Endothelial cell of umbilical vein (primary cell): ENCODE measurements at regions of chr12 and their contacts with region 1.

Region 1: GRCh38 chr12:75977952-75978671 is 53.5 kb downstream of the PHLDA1 start:
- DNase-seq: peak; percentile 100
- H3K4me3 ChIP-seq: no peak overlapping the region
- H3K27ac ChIP-seq: peak overlapping the region; percentile 96
- H3K4me1 ChIP-seq: peaks cover 44% of the 10 kb centered on the region
- H3K27me3 ChIP-seq: no peaks in the 10 kb centered on the region
- CTCF ChIP-seq: peak in 1 of 2 donors; percentile 11
- POLR2A ChIP-seq: no peak

Region 2: GRCh38 chr12:75526655-75527511 is 451.2 kb before region 1 on chr12:
- CTCF ChIA-PET with region 1: interaction called, 4 read pairs
- POLR2A ChIA-PET with region 1: no interaction called
- dilution Hi-C with region 1: no loop called
- intact Hi-C with region 1: loop called (anchors 1 kb)
- DNase-seq: peak; percentile 70
- H3K4me3 ChIP-seq: no peak overlapping the region
- H3K27ac ChIP-seq: no peak overlapping the region
- H3K4me1 ChIP-seq: no peaks in the 10 kb centered on the region
- H3K27me3 ChIP-seq: no peaks in the 10 kb centered on the region
- CTCF ChIP-seq: peak; percentile 38 to 49
- POLR2A ChIP-seq: no peak

Region 3: DNA sequence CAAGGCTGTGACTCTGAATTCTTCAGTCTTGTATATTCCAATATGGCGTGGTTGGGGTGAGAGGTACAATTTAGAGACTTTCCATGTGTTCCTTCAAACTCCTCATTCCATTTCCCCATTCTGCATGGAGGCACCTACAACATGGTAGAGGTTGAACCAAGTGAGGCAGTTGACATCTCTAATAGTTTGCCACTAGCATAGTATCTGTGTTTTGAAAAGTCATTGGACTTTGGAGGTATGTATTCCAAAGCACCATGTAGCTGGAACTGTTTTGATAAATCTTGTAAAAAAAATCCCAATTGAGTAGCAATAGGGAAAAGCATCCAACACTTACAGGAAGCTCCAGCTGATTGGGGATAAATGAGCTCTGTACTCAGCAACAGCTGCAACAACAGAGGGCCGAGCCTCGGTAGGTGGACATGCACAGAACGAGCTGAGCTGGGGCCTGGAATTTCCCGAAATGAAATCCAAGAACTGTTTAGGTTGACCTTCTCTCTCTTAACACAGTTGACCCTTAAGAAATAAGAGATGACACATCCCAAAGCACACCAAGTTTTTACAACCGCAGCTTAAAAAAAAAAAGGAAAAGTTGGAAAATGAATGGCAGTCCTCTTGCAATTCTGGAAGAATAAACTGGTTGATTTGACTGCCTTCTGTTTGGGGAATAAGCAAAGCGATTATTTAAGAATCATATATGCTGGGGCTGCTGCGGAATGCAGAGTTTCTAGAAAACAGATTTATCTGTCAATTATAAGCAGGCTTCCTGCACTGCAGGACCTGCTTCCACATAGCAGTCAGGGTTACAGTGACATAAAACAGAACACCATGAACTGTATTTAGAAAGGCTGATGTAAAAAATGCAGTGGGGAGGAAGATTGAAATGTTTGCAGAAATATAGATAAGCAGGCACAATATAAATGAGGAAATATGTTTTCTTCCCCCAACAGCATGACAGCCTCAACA is 272.1 kb before region 1 on chr12:
- CTCF ChIA-PET with region 1: no interaction called
- POLR2A ChIA-PET with region 1: no interaction called
- dilution Hi-C with region 1: no loop called
- intact Hi-C with region 1: loop called (anchors 1 kb)
- DNase-seq: peak; percentile 98
- H3K4me3 ChIP-seq: peak overlapping the region in 1 of 3 experiments; percentile 37
- H3K27ac ChIP-seq: peak overlapping the region; percentile 84
- H3K4me1 ChIP-seq: peaks cover 44% of the 10 kb centered on the region
- H3K27me3 ChIP-seq: no peaks in the 10 kb centered on the region
- CTCF ChIP-seq: no peak
- POLR2A ChIP-seq: peak; percentile 49

Region 4: GRCh38 chr12:75814851-75815754 is 163.0 kb before region 1 on chr12:
- CTCF ChIA-PET with region 1: no interaction called
- POLR2A ChIA-PET with region 1: no interaction called
- dilution Hi-C with region 1: no loop called
- intact Hi-C with region 1: loop called (anchors 1 kb)
- DNase-seq: peak; percentile 95
- H3K4me3 ChIP-seq: no peak overlapping the region
- H3K27ac ChIP-seq: peak overlapping the region; percentile 19
- H3K4me1 ChIP-seq: peaks cover 10% of the 10 kb centered on the region
- H3K27me3 ChIP-seq: no peaks in the 10 kb centered on the region
- CTCF ChIP-seq: no peak
- POLR2A ChIP-seq: no peak

Region 5: GRCh38 chr12:75933101-75933500 is 45.0 kb before region 1 on chr12:
- CTCF ChIA-PET with region 1: interaction called, 6 read pairs
- POLR2A ChIA-PET with region 1: interaction called, 5 read pairs
- dilution Hi-C with region 1: no loop called
- intact Hi-C with region 1: loop called (anchors 1 kb)
- DNase-seq: peak; percentile 27
- H3K4me3 ChIP-seq: no peak overlapping the region
- H3K27ac ChIP-seq: no peak overlapping the region
- H3K4me1 ChIP-seq: peaks cover 20% of the 10 kb centered on the region
- H3K27me3 ChIP-seq: peaks cover 13% of the 10 kb centered on the region in 2 experiments
- CTCF ChIP-seq: no peak
- POLR2A ChIP-seq: no peak

Region 6: GRCh38 chr12:75996861-75997447 is 18.8 kb after region 1 on chr12:
- CTCF ChIA-PET with region 1: no interaction called
- POLR2A ChIA-PET with region 1: interaction called, 3 read pairs
- dilution Hi-C with region 1: no loop called
- intact Hi-C with region 1: loop called (anchors 1 kb)
- DNase-seq: peak; percentile 50
- H3K4me3 ChIP-seq: no peak overlapping the region
- H3K27ac ChIP-seq: peak overlapping the region; percentile 67
- H3K4me1 ChIP-seq: peaks cover 31% of the 10 kb centered on the region
- H3K27me3 ChIP-seq: no peaks in the 10 kb centered on the region
- CTCF ChIP-seq: no peak
- POLR2A ChIP-seq: no peak

Region 7: DNA sequence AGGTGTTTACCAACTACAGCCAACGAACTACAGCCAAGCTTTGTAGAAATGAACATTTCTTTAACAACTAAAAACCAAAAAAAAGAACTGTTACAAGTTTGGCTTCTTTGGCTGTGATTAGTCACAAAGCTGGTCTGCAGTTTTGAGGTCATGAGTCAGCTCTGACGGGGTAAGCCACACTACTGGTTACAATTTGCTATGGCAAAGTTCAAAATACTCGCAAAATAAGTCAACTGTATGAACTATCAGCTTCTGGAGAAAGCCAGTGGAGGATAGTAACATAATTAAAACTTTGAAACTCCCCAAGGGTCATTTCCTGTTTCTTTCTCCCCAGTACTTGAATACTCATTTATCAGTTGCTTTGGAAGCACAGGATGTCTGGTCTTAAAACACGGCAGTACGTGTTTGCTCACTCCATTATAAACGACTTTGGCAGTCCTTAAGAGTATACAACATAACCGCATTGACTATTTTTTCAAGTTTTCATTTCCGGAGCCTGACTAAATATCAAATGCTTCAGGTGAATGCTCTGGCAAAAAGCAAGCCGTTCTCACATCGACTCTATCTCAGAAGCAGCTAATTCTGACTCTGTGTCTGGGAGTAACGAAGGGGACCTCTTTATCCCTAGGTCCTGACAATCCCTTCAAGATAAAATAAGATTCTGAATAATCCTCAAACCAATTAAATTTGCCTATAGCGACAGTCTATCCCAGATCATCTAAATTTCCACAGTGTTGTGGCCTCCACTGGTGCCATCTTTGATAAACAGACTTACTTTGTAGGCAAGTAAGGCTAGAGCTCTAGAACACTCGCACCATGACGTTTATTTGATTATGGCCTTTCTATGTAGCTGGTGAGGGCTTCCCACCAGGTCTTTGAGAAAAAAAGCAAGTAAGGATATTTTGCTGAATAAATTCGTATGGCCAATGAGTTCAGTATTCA is 42.9 kb after region 1 on chr12:
- CTCF ChIA-PET with region 1: interaction called, 4 read pairs
- POLR2A ChIA-PET with region 1: interaction called, 3 read pairs
- dilution Hi-C with region 1: no loop called
- intact Hi-C with region 1: loop called (anchors 1 kb)
- DNase-seq: peak; percentile 94
- H3K4me3 ChIP-seq: no peak overlapping the region
- H3K27ac ChIP-seq: peak overlapping the region; percentile 82
- H3K4me1 ChIP-seq: peaks cover 35% of the 10 kb centered on the region
- H3K27me3 ChIP-seq: no peaks in the 10 kb centered on the region
- CTCF ChIP-seq: no peak
- POLR2A ChIP-seq: peak; percentile 33